AG04450 (cell line): ENCODE measurements at regions of chr7 and their contacts with region 1.

Region 1: GRCh38 chr7:36440880-36441279 is 51.2 kb downstream of the ANLN start:
- DNase-seq: no peak
- H3K4me3 ChIP-seq: no peak overlapping the region
- H3K27ac ChIP-seq: no peak overlapping the region
- H3K27me3 ChIP-seq: no peaks in the 10 kb centered on the region
- CTCF ChIP-seq: peak; percentile 57

Region 2: DNA sequence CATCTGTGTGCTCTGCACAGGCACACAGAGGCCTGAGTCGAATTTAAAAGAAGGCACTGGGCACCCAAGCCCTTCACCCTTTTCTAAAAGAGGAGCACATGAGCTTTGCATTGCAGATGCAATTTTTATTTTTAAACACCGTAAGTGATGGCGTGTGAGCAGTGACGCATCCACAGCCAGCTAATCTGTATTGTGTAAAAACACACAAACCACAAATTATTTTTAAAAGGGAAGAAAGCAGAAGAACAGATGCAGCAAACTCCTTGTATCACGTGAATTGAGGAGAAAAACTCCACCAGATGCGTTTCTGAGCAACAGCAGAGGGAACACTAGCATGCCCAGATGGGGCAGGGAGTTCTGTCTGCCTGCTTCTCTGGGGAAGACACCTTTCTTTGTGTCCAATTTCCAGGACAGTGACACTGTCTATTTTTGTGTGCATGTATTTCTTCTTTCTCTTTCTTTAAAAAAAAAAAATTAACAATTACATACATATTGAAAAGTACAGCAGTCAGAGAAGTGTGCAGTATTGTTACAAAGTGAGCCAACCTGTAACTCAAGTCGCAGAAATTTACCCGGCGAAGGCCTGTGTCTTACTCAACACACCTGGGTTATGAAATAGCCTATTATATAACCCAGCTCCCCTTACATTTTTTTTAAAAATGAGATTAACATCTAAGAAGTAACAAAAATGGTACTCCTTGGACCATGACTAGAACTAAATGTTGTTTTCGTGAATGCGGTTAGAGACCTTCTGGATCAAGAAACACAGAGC is 248.6 kb before region 1 on chr7:
- CTCF ChIA-PET with region 1: no interaction called
- POLR2A ChIA-PET with region 1: no interaction called
- DNase-seq: peak; percentile 85
- H3K4me3 ChIP-seq: no peak overlapping the region
- H3K27ac ChIP-seq: peak overlapping the region; percentile 89
- H3K27me3 ChIP-seq: no peaks in the 10 kb centered on the region
- CTCF ChIP-seq: 0 out of 2 replicates have a peak, but pooled peaks have one; percentile 20

Region 3: DNA sequence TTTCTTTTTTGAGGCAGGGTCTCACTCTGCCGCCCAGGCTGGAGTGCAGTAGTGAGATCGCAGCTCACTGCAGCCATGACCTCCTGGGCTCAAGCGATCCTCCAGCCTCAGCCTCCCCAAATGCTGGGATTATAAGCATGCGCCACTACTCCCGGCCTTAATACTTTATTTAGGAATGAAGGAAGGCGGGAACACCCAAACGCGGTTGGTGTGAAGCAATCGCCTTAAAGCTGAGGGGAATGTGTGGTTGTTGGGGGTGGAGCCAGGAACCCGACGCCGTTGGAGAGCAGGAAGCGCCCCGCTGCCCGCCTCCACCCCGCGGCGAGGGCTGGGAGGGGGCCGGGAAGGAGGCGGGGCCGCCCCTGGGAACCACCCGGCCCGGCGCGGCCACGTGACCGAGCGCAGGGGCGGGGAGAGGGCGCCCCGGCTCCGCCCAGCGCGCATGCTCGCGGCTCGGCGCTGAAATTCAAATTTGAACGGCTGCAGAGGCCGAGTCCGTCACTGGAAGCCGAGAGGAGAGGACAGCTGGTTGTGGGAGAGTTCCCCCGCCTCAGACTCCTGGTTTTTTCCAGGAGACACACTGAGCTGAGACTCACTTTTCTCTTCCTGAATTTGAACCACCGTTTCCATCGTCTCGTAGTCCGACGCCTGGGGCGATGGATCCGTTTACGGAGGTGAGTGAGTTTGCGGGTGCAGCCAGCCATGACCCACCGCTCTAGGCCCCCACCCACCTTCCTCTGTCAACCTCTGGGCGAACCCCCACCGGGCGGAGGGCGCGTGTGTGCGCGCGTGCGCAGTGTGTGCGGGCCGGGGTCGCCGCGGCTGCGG is 51.3 kb before region 1 on chr7 and contains the start of gene ANLN:
- CTCF ChIA-PET with region 1: interaction called, 33 read pairs
- POLR2A ChIA-PET with region 1: interaction called, 3 read pairs
- DNase-seq: peak; percentile 79
- H3K4me3 ChIP-seq: peak within 1 kb of the TSS; percentile 86
- H3K27ac ChIP-seq: peak within 1 kb of the TSS; percentile 49
- H3K27me3 ChIP-seq: no peaks in the 10 kb centered on the region
- CTCF ChIP-seq: no peak
- polyA plus RNA-seq, gene ANLN: 34.0 and 46.6 TPM in 2 replicates

Region 4: GRCh38 chr7:36406156-36406555 is 34.7 kb before region 1 on chr7:
- CTCF ChIA-PET with region 1: interaction called, 11 read pairs
- POLR2A ChIA-PET with region 1: no interaction called
- DNase-seq: no peak
- H3K4me3 ChIP-seq: no peak overlapping the region
- H3K27ac ChIP-seq: no peak overlapping the region
- H3K27me3 ChIP-seq: no peaks in the 10 kb centered on the region
- CTCF ChIP-seq: no peak

Region 5: GRCh38 chr7:36422072-36422471 is 18.8 kb before region 1 on chr7:
- CTCF ChIA-PET with region 1: interaction called, 22 read pairs
- POLR2A ChIA-PET with region 1: no interaction called
- DNase-seq: no peak
- H3K4me3 ChIP-seq: no peak overlapping the region
- H3K27ac ChIP-seq: no peak overlapping the region
- H3K27me3 ChIP-seq: no peaks in the 10 kb centered on the region
- CTCF ChIP-seq: no peak

Region 6: GRCh38 chr7:36456548-36456947 is 15.7 kb after region 1 on chr7:
- CTCF ChIA-PET with region 1: interaction called, 46 read pairs
- POLR2A ChIA-PET with region 1: no interaction called
- DNase-seq: no peak
- H3K4me3 ChIP-seq: no peak overlapping the region
- H3K27ac ChIP-seq: no peak overlapping the region
- H3K27me3 ChIP-seq: no peaks in the 10 kb centered on the region
- CTCF ChIP-seq: no peak

Region 7: DNA sequence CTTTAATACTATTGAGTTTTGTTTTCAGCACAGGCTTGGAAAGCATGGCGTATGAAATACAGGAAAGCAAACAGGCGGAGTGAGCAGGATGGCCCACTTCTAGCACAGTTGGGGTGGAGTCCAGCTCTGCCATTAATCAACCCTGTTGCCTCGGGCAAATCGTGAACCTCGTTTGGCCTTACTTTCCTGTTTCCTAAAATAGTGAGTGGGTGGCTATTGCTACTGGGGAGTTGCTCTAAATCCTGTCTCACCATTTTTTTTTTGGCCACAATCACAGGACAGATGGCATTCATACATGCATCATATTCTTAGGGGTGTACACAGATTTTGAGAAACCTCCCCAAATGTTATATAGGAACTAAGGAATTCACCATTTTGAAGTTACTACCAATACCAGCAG is 106.5 kb after region 1 on chr7:
- CTCF ChIA-PET with region 1: no interaction called
- POLR2A ChIA-PET with region 1: no interaction called
- DNase-seq: no peak
- H3K4me3 ChIP-seq: no peak overlapping the region
- H3K27ac ChIP-seq: no peak overlapping the region
- H3K27me3 ChIP-seq: peaks cover 2% of the 10 kb centered on the region
- CTCF ChIP-seq: no peak

Region 8: GRCh38 chr7:36563706-36564327 is 122.9 kb after region 1 on chr7:
- CTCF ChIA-PET with region 1: no interaction called
- POLR2A ChIA-PET with region 1: no interaction called
- DNase-seq: peak; percentile 11
- H3K4me3 ChIP-seq: no peak overlapping the region
- H3K27ac ChIP-seq: no peak overlapping the region
- H3K27me3 ChIP-seq: peaks cover 3% of the 10 kb centered on the region
- CTCF ChIP-seq: no peak

Region 9: GRCh38 chr7:37201003-37201875 is 760.4 kb after region 1 on chr7:
- CTCF ChIA-PET with region 1: interaction called, 14 read pairs
- POLR2A ChIA-PET with region 1: no interaction called
- DNase-seq: peak; percentile 30
- H3K4me3 ChIP-seq: no peak overlapping the region
- H3K27ac ChIP-seq: no peak overlapping the region
- H3K27me3 ChIP-seq: peaks cover 2% of the 10 kb centered on the region
- CTCF ChIP-seq: peak; percentile 82

Region 10: GRCh38 chr7:37604078-37604477 is 1163.2 kb after region 1 on chr7:
- CTCF ChIA-PET with region 1: no interaction called
- POLR2A ChIA-PET with region 1: no interaction called
- DNase-seq: no peak
- H3K4me3 ChIP-seq: no peak overlapping the region
- H3K27ac ChIP-seq: no peak overlapping the region
- H3K27me3 ChIP-seq: no peaks in the 10 kb centered on the region
- CTCF ChIP-seq: no peak